ENCODE measurements at regions of chr12 and their contacts with region 1.

Region 1: DNA sequence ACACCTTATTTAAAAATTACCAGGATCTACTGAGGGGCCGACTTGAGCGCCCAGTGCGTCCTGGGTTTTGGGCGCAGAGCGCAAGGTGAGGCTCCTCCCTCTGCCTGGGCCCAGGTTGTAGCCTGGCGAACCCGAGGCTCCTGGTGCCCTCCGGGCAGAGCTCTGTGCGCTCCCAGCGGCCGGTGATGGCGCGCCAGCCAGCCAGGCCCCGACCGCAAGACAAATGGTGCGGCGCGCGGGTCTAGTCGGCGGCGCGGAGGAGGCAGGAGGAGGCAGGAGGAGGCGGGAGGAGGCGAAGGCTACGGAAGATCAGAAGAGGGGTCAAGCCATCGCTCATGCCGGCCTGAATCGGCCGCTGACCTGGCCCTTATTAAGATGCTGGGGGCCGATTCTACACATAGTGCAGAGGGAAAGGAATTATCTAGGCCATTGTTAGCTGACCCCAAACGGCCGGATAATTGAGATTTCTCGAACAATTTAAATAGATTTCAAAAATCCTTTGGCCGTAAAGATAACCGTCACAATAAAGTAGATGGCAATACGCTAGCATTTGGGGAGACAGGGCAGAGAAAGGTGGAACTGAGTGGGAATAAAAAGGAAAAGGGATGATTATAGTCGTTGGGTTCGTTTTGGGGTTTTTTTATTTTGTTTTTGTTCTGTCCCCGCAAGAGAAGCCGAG is 2.8 kb downstream of the TBX5 start:
- DNase-seq: peak; percentile 32
- ATAC-seq: no peak
- H3K4me3 Mint-ChIP-seq: no peak overlapping the region
- H3K27ac Mint-ChIP-seq: no peak overlapping the region
- H3K4me1 Mint-ChIP-seq: peaks cover 2% of the 10 kb centered on the region
- H3K27me3 Mint-ChIP-seq: peaks cover 83% of the 10 kb centered on the region

Region 2: DNA sequence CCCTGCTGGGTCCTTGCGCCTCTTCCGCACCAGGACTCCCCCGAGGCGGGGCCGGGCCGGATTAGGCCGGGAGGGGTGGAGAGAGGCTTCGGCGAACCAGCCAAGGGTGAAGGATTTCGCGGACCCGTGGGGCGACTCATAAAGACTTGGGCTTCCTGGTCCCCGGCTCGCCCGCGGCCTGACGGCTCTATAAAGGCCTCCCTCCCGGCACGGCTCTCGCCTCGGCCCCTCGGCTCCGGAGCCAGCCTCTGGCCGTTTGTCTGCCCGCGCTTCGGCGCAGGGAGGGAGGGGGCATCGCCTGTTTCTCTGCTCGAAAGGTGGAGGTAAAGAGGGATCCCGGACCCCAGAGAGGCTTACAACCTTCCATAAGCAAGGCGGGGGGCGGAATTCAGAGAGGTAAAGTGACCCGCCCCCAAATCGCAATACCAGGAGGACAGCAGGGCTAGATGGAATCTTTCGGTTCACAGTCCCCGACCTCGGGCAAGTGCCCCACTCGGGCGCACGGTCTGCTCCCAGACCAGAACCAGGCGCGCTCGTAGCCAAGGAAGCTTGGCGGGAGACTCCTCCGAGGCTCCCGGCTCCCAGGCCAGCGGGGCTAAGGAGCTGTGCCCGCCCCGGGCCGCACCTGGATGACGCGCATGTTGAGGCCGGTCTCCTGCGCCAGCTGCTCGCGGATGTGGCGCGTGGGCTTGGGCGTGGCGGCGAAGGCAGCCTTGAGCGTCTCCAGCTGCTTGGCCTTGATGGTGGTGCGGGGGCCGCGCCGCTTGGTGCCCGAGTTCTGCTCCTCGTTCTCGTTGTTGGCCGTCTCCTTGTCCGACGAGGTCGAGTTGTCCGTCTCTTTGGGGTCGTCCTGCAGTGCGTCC is 935.4 kb before region 1 on chr12:
- CTCF ChIA-PET with region 1: no interaction called
- POLR2A ChIA-PET with region 1: no interaction called
- intact Hi-C with region 1: loop called (anchors 2 to 5 kb)
- DNase-seq: no peak
- ATAC-seq: no peak
- H3K4me3 Mint-ChIP-seq: no peak overlapping the region
- H3K27ac Mint-ChIP-seq: no peak overlapping the region
- H3K4me1 Mint-ChIP-seq: peaks cover 18% of the 10 kb centered on the region
- H3K27me3 Mint-ChIP-seq: peaks cover 64% of the 10 kb centered on the region

Region 3: GRCh38 chr12:114440270-114441038 is 37.3 kb after region 1 on chr12:
- CTCF ChIA-PET with region 1: no interaction called
- POLR2A ChIA-PET with region 1: no interaction called
- intact Hi-C with region 1: loop called (anchors 2 kb)
- DNase-seq: no peak
- ATAC-seq: no peak
- H3K4me3 Mint-ChIP-seq: no peak overlapping the region
- H3K27ac Mint-ChIP-seq: no peak overlapping the region
- H3K4me1 Mint-ChIP-seq: no peaks in the 10 kb centered on the region
- H3K27me3 Mint-ChIP-seq: peaks cover 73% of the 10 kb centered on the region

Region 4: DNA sequence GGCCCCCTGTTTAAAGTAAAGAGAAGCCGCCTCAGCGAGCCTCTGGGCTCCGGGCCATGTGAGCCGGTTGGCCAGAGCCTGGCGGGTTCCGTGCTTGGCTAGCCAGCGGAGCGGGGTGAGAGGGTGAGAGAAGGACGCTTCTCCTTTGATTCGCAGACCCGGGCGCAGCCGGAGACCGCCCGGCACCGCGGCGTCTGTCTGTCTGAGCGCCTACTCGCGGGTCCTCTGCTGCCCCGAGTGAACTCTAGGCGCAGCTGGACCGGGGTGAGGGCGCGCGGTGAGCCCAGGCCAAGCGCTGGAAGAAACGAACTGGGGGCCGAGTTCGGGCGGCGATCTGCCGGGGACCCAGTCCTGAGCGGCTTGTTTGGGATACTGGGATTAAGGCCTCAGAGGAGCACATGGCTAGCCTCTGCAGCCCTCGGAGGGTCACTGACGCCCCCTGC is 44.1 kb after region 1 on chr12:
- CTCF ChIA-PET with region 1: no interaction called
- POLR2A ChIA-PET with region 1: no interaction called
- intact Hi-C with region 1: loop called in 1 of 2 experiments (anchors 2 kb)
- DNase-seq: peak; percentile 3
- ATAC-seq: no peak
- H3K4me3 Mint-ChIP-seq: no peak overlapping the region
- H3K27ac Mint-ChIP-seq: no peak overlapping the region
- H3K4me1 Mint-ChIP-seq: no peaks in the 10 kb centered on the region
- H3K27me3 Mint-ChIP-seq: peaks cover 76% of the 10 kb centered on the region

Region 5: GRCh38 chr12:114668151-114668885 is 265.2 kb after region 1 on chr12:
- CTCF ChIA-PET with region 1: no interaction called
- POLR2A ChIA-PET with region 1: no interaction called
- intact Hi-C with region 1: loop called (anchors 2 kb)
- DNase-seq: peak; percentile 67
- ATAC-seq: peak; percentile 61
- H3K4me3 Mint-ChIP-seq: no peak overlapping the region
- H3K27ac Mint-ChIP-seq: no peak overlapping the region
- H3K4me1 Mint-ChIP-seq: no peaks in the 10 kb centered on the region
- H3K27me3 Mint-ChIP-seq: peaks cover 64% of the 10 kb centered on the region

Region 6: GRCh38 chr12:114684098-114684869 is 281.1 kb after region 1 on chr12 and contains the start of gene TBX3:
- CTCF ChIA-PET with region 1: no interaction called
- POLR2A ChIA-PET with region 1: no interaction called
- intact Hi-C with region 1: loop called in 1 of 2 experiments (anchors 5 kb)
- DNase-seq: peak; percentile 86
- ATAC-seq: peak; percentile 94
- H3K4me3 Mint-ChIP-seq: peak within 1 kb of the TSS; percentile 71
- H3K27ac Mint-ChIP-seq: peak within 1 kb of the TSS; percentile 33
- H3K4me1 Mint-ChIP-seq: peaks cover 38% of the 10 kb centered on the region
- H3K27me3 Mint-ChIP-seq: peaks cover 90% of the 10 kb centered on the region
- total RNA-seq, gene TBX3: not detected

Region 7: GRCh38 chr12:114692558-114693480 is 289.7 kb after region 1 on chr12:
- CTCF ChIA-PET with region 1: no interaction called
- POLR2A ChIA-PET with region 1: no interaction called
- intact Hi-C with region 1: loop called (anchors 5 to 10 kb)
- DNase-seq: no peak
- ATAC-seq: no peak
- H3K4me3 Mint-ChIP-seq: no peak overlapping the region
- H3K27ac Mint-ChIP-seq: no peak overlapping the region
- H3K4me1 Mint-ChIP-seq: peaks cover 2% of the 10 kb centered on the region
- H3K27me3 Mint-ChIP-seq: peaks cover 90% of the 10 kb centered on the region

Measured in activated CD4-positive, alpha-beta T cell treated with anti-CD3 and anti-CD28 coated beads for 36 hours (primary cell).